ENCODE measurements at regions of chr10 and their contacts with region 1.

Region 1: DNA sequence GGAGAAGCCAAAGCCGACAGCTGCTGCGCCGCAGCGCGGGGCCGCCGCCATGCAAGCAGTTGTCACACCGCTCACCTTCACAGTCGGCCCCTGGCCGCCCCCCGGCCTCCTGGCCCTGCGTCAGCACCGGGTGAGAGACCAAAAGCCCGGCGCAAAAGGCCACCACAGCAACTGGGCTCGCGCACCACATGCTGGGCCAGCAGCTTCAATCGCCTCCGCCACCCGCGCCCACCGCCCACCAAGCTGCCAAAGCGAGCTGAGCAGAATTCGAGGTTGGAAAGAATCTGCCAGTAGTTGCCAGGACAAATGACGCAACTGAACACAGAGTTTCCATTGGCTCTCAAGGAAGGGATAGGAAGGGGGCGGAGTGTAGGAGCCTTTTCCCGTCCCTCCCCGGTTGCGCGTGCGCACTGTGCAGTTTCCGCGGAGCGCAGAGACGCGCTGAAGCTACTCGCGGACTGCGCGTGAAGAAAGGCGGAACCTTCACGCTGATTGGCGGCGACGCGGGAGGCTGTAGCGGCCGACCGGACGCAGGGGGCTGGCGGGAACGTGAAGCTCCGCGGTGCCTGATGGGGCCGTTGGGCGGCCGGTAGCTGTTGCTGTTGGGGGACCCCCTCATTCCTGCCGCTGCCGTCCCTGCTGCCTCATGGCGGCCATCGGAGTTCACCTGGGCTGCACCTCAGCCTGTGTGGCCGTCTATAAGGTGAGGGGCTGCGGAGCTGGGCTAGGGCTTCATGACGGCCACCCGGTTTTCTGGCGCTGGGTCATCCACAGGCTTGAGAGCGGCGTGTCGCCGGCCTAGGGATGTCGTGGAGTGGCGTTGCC is at the starts of genes CDNF, HSPA14 and MSANTD7:
- DNase-seq: peak; percentile 100
- ATAC-seq: peak; percentile 97
- H3K4me3 Mint-ChIP-seq: peak within 1 kb of the TSS; percentile 89
- H3K27ac Mint-ChIP-seq: peak within 1 kb of the TSS; percentile 94
- H3K4me1 Mint-ChIP-seq: peaks cover 18% of the 10 kb centered on the region
- H3K27me3 Mint-ChIP-seq: no peaks in the 10 kb centered on the region
- total RNA-seq, gene CDNF: 2.5 to 2.7 TPM
- total RNA-seq, gene HSPA14: 26.1 to 36.0 TPM
- total RNA-seq, gene MSANTD7: 19.2 to 22.9 TPM

Region 2: GRCh38 chr10:13348216-13349017 is 1489.6 kb before region 1 on chr10 and contains the start of gene SEPHS1:
- CTCF ChIA-PET with region 1: no interaction called
- POLR2A ChIA-PET with region 1: no interaction called
- intact Hi-C with region 1: loop called in 1 of 2 experiments (anchors 2 kb)
- DNase-seq: peak; percentile 93
- ATAC-seq: peak; percentile 77
- H3K4me3 Mint-ChIP-seq: peak within 1 kb of the TSS; percentile 87
- H3K27ac Mint-ChIP-seq: peak within 1 kb of the TSS; percentile 95
- H3K4me1 Mint-ChIP-seq: peaks cover 57% of the 10 kb centered on the region
- H3K27me3 Mint-ChIP-seq: no peaks in the 10 kb centered on the region
- total RNA-seq, gene SEPHS1: 74.5 to 74.7 TPM

Region 3: GRCh38 chr10:14009371-14010100 is 828.4 kb before region 1 on chr10:
- CTCF ChIA-PET with region 1: no interaction called
- POLR2A ChIA-PET with region 1: no interaction called
- intact Hi-C with region 1: loop called in 1 of 2 experiments (anchors 5 kb)
- DNase-seq: peak; percentile 84
- ATAC-seq: peak; percentile 88
- H3K4me3 Mint-ChIP-seq: peak overlapping the region; percentile 75
- H3K27ac Mint-ChIP-seq: peak overlapping the region; percentile 92
- H3K4me1 Mint-ChIP-seq: peaks cover 41% of the 10 kb centered on the region
- H3K27me3 Mint-ChIP-seq: peaks cover 3% of the 10 kb centered on the region

Region 4: DNA sequence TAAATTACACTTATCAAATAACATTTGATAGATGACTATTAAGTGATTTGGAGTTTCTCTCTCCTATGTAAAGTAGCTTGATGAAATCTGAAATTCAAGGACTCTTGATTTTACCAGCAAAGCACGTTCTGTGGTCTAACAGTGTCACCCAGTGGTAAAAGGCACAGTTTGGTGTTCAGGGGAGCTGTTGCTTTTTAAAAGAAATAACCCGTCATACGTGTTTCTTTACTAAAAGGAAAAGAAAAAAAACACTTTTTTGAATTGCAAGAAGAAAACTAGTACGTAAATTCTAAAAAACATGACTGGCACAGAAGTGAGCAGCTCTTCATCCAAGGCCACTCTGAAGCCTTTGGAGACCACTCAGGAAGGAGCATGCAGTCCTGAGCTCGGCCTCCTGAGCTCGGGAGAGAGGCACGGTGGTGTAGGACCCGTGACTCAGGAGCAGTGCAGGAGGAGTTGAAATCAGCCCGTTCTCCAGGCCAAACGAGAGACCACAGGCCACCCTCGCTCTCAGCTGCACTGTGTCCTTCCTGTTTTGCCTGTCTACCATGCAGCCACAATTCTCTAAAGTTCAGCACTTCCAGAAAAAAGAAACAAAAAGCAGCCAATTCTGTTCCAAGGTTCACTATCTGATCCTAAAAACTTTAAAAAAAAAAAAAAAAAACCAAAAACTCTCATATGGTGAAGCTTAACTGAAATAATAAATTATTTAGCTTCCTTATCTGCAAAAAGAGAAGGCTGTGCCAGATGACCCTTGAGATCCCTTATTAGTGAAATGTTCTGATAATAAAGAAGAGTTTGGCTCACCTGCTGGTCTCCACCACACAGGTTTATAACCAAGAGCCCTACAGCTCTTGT is 294.7 kb before region 1 on chr10:
- CTCF ChIA-PET with region 1: interaction called, 15 read pairs
- POLR2A ChIA-PET with region 1: no interaction called
- intact Hi-C with region 1: loop called in 1 of 2 experiments (anchors 5 kb)
- DNase-seq: peak; percentile 60
- ATAC-seq: peak; percentile 81
- H3K4me3 Mint-ChIP-seq: peak overlapping the region; percentile 62
- H3K27ac Mint-ChIP-seq: peak overlapping the region; percentile 90
- H3K4me1 Mint-ChIP-seq: peaks cover 79% of the 10 kb centered on the region
- H3K27me3 Mint-ChIP-seq: no peaks in the 10 kb centered on the region

Region 5: DNA sequence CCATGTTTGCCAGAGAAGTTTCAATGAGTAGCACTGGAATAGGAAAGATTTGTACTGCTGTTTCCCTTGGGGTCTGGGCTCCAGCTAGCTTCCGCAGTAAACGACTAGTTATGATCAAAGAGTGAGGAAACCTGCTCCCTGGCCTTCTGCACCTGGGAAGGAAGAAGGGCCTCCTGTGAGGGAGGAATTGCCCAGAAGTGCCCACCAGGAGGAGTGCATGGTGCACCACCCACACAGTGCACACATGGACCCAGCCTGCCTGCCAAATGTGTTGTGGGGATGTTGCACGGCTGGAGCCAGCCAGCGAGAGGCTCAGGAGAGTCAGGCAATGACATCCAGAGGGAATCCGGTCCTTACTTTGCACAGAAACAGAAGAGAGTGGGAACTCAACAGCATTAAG is 36.2 kb before region 1 on chr10:
- CTCF ChIA-PET with region 1: no interaction called
- POLR2A ChIA-PET with region 1: no interaction called
- intact Hi-C with region 1: no loop called
- DNase-seq: no peak
- ATAC-seq: no peak
- H3K4me3 Mint-ChIP-seq: no peak overlapping the region
- H3K27ac Mint-ChIP-seq: no peak overlapping the region
- H3K4me1 Mint-ChIP-seq: no peaks in the 10 kb centered on the region
- H3K27me3 Mint-ChIP-seq: no peaks in the 10 kb centered on the region

Region 6: DNA sequence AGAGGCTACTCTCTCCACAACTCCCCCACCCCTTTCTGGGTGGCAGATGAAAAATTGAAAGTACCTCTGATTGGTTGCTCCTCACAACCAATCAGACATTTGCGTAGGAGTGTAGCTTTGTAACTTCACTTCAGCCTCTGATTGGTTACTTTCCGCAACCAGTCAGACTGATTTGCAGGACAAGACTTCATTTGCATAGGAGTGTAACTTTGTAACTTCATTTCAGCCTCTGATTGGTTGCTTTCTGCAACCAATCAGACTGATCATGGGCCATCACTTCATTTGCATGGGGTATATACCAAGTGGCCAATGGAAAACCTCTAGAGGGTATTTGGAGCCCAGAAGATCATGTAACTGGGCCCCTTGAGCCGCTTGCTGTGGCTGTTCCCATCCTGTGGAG is 25.7 kb before region 1 on chr10:
- CTCF ChIA-PET with region 1: interaction called, 3 read pairs
- POLR2A ChIA-PET with region 1: no interaction called
- intact Hi-C with region 1: loop called in 1 of 2 experiments (anchors 2 kb)
- DNase-seq: no peak
- ATAC-seq: peak; percentile 59
- H3K4me3 Mint-ChIP-seq: peak overlapping the region; percentile 23
- H3K27ac Mint-ChIP-seq: no peak overlapping the region
- H3K4me1 Mint-ChIP-seq: peaks cover 25% of the 10 kb centered on the region
- H3K27me3 Mint-ChIP-seq: no peaks in the 10 kb centered on the region

Region 7: GRCh38 chr10:14954001-14954770 is 116.2 kb after region 1 on chr10 and contains the start of gene DCLRE1C:
- CTCF ChIA-PET with region 1: interaction called, 6 read pairs
- POLR2A ChIA-PET with region 1: interaction called, 6 read pairs
- intact Hi-C with region 1: loop called (anchors 1 kb)
- DNase-seq: peak; percentile 94
- ATAC-seq: peak; percentile 94
- H3K4me3 Mint-ChIP-seq: peak within 1 kb of the TSS; percentile 90
- H3K27ac Mint-ChIP-seq: peak within 1 kb of the TSS; percentile 97
- H3K4me1 Mint-ChIP-seq: peaks cover 52% of the 10 kb centered on the region
- H3K27me3 Mint-ChIP-seq: no peaks in the 10 kb centered on the region
- total RNA-seq, gene DCLRE1C: 17.9 to 30.9 TPM